ENCODE measurements at regions of chr1 and their contacts with region 1.

Region 1: GRCh38 chr1:234373064-234373958 is at the start of gene COA6:
- DNase-seq: peak; percentile 89 to 98
- ATAC-seq: peak; percentile 97 to 98
- H3K4me3 ChIP-seq: peak within 1 kb of the TSS; percentile 66
- H3K27ac ChIP-seq: peak within 1 kb of the TSS; percentile 95 to 99
- H3K4me1 ChIP-seq: peaks cover 38% of the 10 kb centered on the region
- CTCF ChIP-seq: no peak
- EP300 ChIP-seq: no peak
- POLR2A ChIP-seq: peak; percentile 91
- RAD21 ChIP-seq: peak; percentile 15 to 23; a peak in 1 of 5 replicates
- polyA plus RNA-seq, gene COA6: 56.9 and 102 TPM in 2 replicates

Region 2: DNA sequence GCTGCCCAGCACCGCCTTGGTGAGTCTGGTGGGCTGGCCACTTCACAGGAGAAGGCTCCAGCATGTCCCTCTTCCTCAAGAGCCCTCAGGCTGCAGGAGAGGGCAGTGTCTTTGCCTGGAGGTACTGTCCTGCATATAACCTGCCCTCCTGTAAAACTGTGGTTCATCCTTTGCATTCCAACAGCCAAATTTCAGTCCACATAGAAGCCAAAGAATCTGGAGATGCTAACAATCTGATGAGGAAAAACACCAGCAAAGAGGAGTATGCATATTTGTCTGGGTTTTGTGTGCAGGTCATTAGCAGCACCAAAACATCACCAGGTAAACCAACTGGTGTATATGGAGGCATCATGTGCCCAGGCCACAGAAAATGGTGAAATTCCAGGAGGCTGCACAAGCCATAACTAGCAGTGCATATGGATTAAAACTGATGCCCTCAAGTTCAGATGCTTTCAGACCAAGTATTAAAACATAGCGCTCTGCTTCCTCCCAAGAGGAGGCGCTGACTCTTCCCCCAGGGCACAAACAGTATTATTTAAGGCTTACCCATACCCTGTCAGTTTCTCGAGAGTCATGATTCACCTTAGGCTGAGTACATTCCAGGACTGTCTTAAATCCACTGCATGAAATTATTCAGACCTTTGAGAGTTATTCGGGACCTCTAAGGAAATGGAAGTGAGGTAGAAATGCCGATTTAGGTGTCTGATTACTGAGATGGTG is 150.6 kb before region 1 on chr1:
- CTCF ChIA-PET with region 1: no interaction called
- POLR2A ChIA-PET with region 1: no interaction called
- DNase-seq: no peak
- ATAC-seq: no peak; a peak in 1 of 6 replicates
- H3K4me3 ChIP-seq: no peak overlapping the region
- H3K27ac ChIP-seq: no peak overlapping the region
- H3K4me1 ChIP-seq: no peaks in the 10 kb centered on the region
- CTCF ChIP-seq: no peak
- EP300 ChIP-seq: no peak
- POLR2A ChIP-seq: no peak
- RAD21 ChIP-seq: no peak

Region 3: GRCh38 chr1:234355782-234356510 is 17.4 kb before region 1 on chr1:
- CTCF ChIA-PET with region 1: interaction called, 3 read pairs
- POLR2A ChIA-PET with region 1: interaction called, 10 read pairs
- DNase-seq: no peak
- ATAC-seq: 0 out of 6 replicates have a peak, but pooled peaks of 1 of the 2 experiments have one; percentile 27
- H3K4me3 ChIP-seq: peak overlapping the region; percentile 49
- H3K27ac ChIP-seq: peak overlapping the region; percentile 74 to 81; a peak in 3 of 6 replicates
- H3K4me1 ChIP-seq: no peaks in the 10 kb centered on the region
- CTCF ChIP-seq: no peak
- EP300 ChIP-seq: no peak
- POLR2A ChIP-seq: no peak
- RAD21 ChIP-seq: no peak

Measured in A549 (cell line).